Activated T-helper 1 cell treated with anti-CD3 and anti-CD28 coated beads, Interleukin-12 subunit alpha, Interleukin-12 subunit beta, Interleukin-2, Interleukin-4 antibody, amounts not matched to agents 30 ng/mL and 10 ng/mL and 1 ng/mL, durations not matched to agents 14 hours and 24 hours and 36 hours (primary cell): ENCODE measurements at regions of chrX and their contacts with region 1.

Region 1: GRCh38 chrX:136646602-136647239 is 1.2 kb upstream of the CD40LG start:
- DNase-seq: no peak
- H3K4me3 Mint-ChIP-seq: peak overlapping the region; percentile 99
- H3K27ac Mint-ChIP-seq: peak overlapping the region; percentile 94
- H3K4me1 Mint-ChIP-seq: peaks cover 57% of the 10 kb centered on the region
- H3K27me3 Mint-ChIP-seq: no peaks in the 10 kb centered on the region

Region 2: GRCh38 chrX:136616987-136617685 is 29.6 kb before region 1 on chrX:
- intact Hi-C with region 1: loop called (anchors 1 kb)
- DNase-seq: no peak
- H3K4me3 Mint-ChIP-seq: peak overlapping the region; percentile 47
- H3K27ac Mint-ChIP-seq: peak overlapping the region; percentile 85
- H3K4me1 Mint-ChIP-seq: peaks cover 53% of the 10 kb centered on the region
- H3K27me3 Mint-ChIP-seq: no peaks in the 10 kb centered on the region

Region 3: DNA sequence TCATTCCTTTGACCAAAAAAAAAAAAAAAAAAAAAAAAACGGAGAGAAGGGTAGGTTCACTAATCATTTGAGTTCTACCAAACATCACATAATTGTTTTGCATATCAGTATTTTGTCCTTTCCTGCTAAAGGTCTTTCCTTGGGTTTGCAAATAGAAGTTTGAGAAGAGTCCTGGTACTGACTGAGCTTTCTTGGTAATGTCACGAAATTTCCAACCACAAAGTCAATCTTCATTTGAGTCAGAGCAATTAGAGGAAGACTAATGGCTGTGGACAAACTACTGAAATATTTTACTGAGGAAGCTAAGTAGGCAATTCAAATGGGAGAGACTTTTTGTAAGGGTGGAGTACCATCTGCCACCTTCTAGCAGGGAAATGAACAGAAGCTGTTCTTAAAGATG is 20.5 kb before region 1 on chrX:
- intact Hi-C with region 1: loop called (anchors 1 kb)
- DNase-seq: no peak
- H3K4me3 Mint-ChIP-seq: peak overlapping the region; percentile 30
- H3K27ac Mint-ChIP-seq: peak overlapping the region; percentile 85
- H3K4me1 Mint-ChIP-seq: peaks cover 94% of the 10 kb centered on the region
- H3K27me3 Mint-ChIP-seq: no peaks in the 10 kb centered on the region

Region 4: GRCh38 chrX:136635235-136635634 is 11.5 kb before region 1 on chrX:
- intact Hi-C with region 1: loop called (anchors 1 kb)
- DNase-seq: no peak
- H3K4me3 Mint-ChIP-seq: peak overlapping the region; percentile 74
- H3K27ac Mint-ChIP-seq: peak overlapping the region; percentile 89
- H3K4me1 Mint-ChIP-seq: peaks cover 83% of the 10 kb centered on the region
- H3K27me3 Mint-ChIP-seq: no peaks in the 10 kb centered on the region

Region 5: GRCh38 chrX:136658151-136658550 is 11.4 kb after region 1 on chrX:
- intact Hi-C with region 1: loop called (anchors 1 kb)
- DNase-seq: no peak
- H3K4me3 Mint-ChIP-seq: peak overlapping the region; percentile 99
- H3K27ac Mint-ChIP-seq: peak overlapping the region; percentile 94
- H3K4me1 Mint-ChIP-seq: peaks cover 89% of the 10 kb centered on the region
- H3K27me3 Mint-ChIP-seq: no peaks in the 10 kb centered on the region

Region 6: GRCh38 chrX:136725446-136726104 is 78.9 kb after region 1 on chrX:
- intact Hi-C with region 1: no loop called
- DNase-seq: no peak
- H3K4me3 Mint-ChIP-seq: no peak overlapping the region
- H3K27ac Mint-ChIP-seq: no peak overlapping the region
- H3K4me1 Mint-ChIP-seq: peaks cover 23% of the 10 kb centered on the region
- H3K27me3 Mint-ChIP-seq: no peaks in the 10 kb centered on the region

Region 7: GRCh38 chrX:136850441-136851175 is 203.9 kb after region 1 on chrX:
- intact Hi-C with region 1: no loop called
- DNase-seq: no peak
- H3K4me3 Mint-ChIP-seq: no peak overlapping the region
- H3K27ac Mint-ChIP-seq: no peak overlapping the region
- H3K4me1 Mint-ChIP-seq: peaks cover 8% of the 10 kb centered on the region
- H3K27me3 Mint-ChIP-seq: no peaks in the 10 kb centered on the region